ENCODE measurements at regions of chr6 and their contacts with region 1.

Region 1: GRCh38 chr6:28136585-28137504 is 4.8 kb upstream of the ZKSCAN8 start:
- DNase-seq: peak; percentile 75 to 88
- ATAC-seq: peak; percentile 62 to 77 (median 75)
- H3K4me3 ChIP-seq: peak overlapping the region; percentile 88
- H3K4me3 Mint-ChIP-seq: peak overlapping the region; percentile 97
- H3K27ac ChIP-seq: peak overlapping the region; percentile 95
- H3K27ac Mint-ChIP-seq: peak overlapping the region; percentile 99 to 100
- H3K4me1 ChIP-seq: peaks cover 16% of the 10 kb centered on the region
- H3K4me1 Mint-ChIP-seq: peaks cover 64 to 75% of the 10 kb centered on the region in 2 donors
- H3K27me3 ChIP-seq: no peaks in the 10 kb centered on the region
- H3K27me3 Mint-ChIP-seq: no peaks in the 10 kb centered on the region
- CTCF ChIP-seq: no peak

Region 2: GRCh38 chr6:27059621-27060425 is 1077.0 kb before region 1 on chr6:
- intact Hi-C with region 1: no loop called
- DNase-seq: no peak
- ATAC-seq: no peak
- H3K4me3 ChIP-seq: no peak overlapping the region
- H3K4me3 Mint-ChIP-seq: no peak overlapping the region
- H3K27ac ChIP-seq: no peak overlapping the region
- H3K27ac Mint-ChIP-seq: no peak overlapping the region
- H3K4me1 ChIP-seq: no peaks in the 10 kb centered on the region
- H3K4me1 Mint-ChIP-seq: no peaks in the 10 kb centered on the region
- H3K27me3 ChIP-seq: peaks cover 5% of the 10 kb centered on the region
- H3K27me3 Mint-ChIP-seq: peaks cover 30 to 51% of the 10 kb centered on the region in 2 donors
- CTCF ChIP-seq: no peak

Region 3: DNA sequence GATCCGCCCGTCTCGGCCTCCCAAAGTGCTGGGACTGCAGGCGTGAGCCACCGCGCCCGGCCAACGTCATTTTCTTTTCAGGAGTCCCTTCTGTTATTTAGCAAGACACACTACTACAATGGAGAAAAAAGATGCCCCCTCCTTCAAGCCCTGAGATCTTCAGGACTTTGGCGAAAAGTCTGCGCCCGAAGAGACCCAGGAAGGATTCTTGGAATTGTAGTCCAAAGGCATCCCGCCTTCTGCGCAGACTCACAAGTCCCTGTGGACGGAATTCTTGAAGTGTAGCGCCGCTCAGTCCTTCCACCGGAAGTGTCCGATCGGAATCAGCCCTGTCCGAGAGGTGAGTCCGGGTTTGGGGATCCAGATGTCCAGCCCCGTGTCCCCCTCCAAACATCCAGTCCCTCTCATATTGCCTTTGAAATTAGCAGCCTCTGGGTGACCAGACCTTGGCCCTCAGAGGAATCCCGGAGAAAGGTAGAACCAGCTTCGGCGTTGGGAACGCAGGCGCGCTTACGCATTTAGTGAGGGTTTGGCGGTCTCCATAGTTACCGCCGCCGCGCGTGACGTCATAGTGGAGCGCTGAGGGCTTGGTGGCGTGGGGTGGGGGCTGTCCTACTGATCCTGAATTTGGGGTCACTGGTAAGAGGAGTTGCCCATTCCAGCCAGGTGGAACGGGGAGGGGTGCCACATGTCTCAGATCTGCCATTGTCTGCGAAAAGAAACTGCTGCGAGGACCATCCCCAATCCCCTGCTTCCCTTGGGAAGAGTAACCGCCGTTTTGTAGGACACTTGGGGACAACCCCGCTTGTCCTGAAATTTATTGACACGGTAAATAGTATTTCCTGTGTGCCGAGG is 56.0 kb before region 1 on chr6:
- intact Hi-C with region 1: loop called (anchors 1 kb)
- DNase-seq: peak; percentile 87 to 96
- ATAC-seq: peak; percentile 81 to 90 (median 87)
- H3K4me3 ChIP-seq: peak overlapping the region; percentile 83
- H3K4me3 Mint-ChIP-seq: peak overlapping the region; percentile 90
- H3K27ac ChIP-seq: peak overlapping the region; percentile 92
- H3K27ac Mint-ChIP-seq: peak overlapping the region; percentile 85 to 90
- H3K4me1 ChIP-seq: peaks cover 10% of the 10 kb centered on the region
- H3K4me1 Mint-ChIP-seq: peaks cover 17 to 26% of the 10 kb centered on the region in 2 donors
- H3K27me3 ChIP-seq: no peaks in the 10 kb centered on the region
- H3K27me3 Mint-ChIP-seq: peaks cover 0 to 9% of the 10 kb centered on the region in 2 donors
- CTCF ChIP-seq: no peak

Region 4: DNA sequence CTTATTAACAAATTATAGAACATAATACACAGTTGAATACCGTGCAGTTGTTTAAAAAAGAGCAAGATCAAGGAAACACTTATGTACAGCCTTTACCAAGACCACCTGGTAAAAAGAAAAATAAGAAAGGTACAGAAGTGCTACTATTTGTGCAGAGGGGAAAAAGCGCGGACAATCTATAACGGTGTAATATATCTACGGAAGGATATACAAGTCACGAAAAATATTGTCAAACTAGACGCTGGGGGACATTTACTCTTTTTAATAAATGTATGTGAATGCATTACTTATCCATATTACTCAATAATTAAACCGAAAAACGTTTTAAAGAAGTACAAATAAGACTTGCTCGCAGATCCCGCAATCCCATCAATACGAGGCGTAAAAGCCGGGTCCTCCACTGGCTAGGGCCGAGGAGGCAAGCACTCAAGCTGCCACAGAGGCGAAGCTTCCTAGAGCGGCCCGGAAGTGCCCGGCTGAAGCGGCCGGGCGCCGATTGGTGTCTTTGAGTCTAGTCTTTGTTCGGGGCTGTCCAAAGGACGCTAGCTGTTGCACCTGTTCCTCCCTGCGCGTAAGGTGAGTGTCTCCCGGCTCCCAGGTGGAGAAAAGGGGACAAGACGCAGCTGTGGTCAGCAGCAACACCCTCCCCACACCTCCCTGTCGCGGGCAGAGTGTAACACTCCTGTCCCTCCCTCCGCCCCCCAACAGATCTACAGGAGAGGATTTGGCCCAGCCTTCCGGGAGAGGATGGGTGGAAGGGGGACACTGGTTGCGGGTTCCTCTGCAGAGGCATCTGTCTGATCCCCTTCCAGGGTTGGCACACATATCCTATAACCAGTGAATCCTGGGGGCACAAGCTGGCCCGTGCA is 12.5 kb before region 1 on chr6 and contains the start of gene ZSCAN16:
- intact Hi-C with region 1: loop called (anchors 1 kb)
- DNase-seq: peak; percentile 76 to 84
- ATAC-seq: peak; percentile 96 to 98 (median 98)
- H3K4me3 ChIP-seq: peak within 1 kb of the TSS; percentile 60
- H3K4me3 Mint-ChIP-seq: peak within 1 kb of the TSS; percentile 92
- H3K27ac ChIP-seq: peak within 1 kb of the TSS; percentile 72
- H3K27ac Mint-ChIP-seq: peak within 1 kb of the TSS; percentile 85 to 89
- H3K4me1 ChIP-seq: peaks cover 9% of the 10 kb centered on the region
- H3K4me1 Mint-ChIP-seq: peaks cover 33 to 40% of the 10 kb centered on the region in 2 donors
- H3K27me3 ChIP-seq: no peaks in the 10 kb centered on the region
- H3K27me3 Mint-ChIP-seq: no peaks in the 10 kb centered on the region
- CTCF ChIP-seq: no peak
- total RNA-seq, gene ZSCAN16: 7.7 to 9.1 (median 7.8) TPM

Region 5: GRCh38 chr6:28296520-28297060 is 159.7 kb after region 1 on chr6:
- intact Hi-C with region 1: no loop called
- DNase-seq: no peak
- ATAC-seq: no peak
- H3K4me3 ChIP-seq: no peak overlapping the region
- H3K4me3 Mint-ChIP-seq: no peak overlapping the region
- H3K27ac ChIP-seq: no peak overlapping the region
- H3K27ac Mint-ChIP-seq: no peak overlapping the region
- H3K4me1 ChIP-seq: no peaks in the 10 kb centered on the region
- H3K4me1 Mint-ChIP-seq: no peaks in the 10 kb centered on the region
- H3K27me3 ChIP-seq: no peaks in the 10 kb centered on the region
- H3K27me3 Mint-ChIP-seq: no peaks in the 10 kb centered on the region
- CTCF ChIP-seq: no peak

Region 6: GRCh38 chr6:28335564-28336283 is 198.9 kb after region 1 on chr6 and contains the start of gene ZSCAN31:
- intact Hi-C with region 1: loop called (anchors 5 kb)
- DNase-seq: peak; percentile 78 to 91
- ATAC-seq: peak; percentile 86 to 95 (median 89)
- H3K4me3 ChIP-seq: peak within 1 kb of the TSS; percentile 78
- H3K4me3 Mint-ChIP-seq: no peak within 1 kb of the TSS
- H3K27ac ChIP-seq: peak within 1 kb of the TSS; percentile 93
- H3K27ac Mint-ChIP-seq: no peak within 1 kb of the TSS
- H3K4me1 ChIP-seq: peaks cover 18% of the 10 kb centered on the region
- H3K4me1 Mint-ChIP-seq: peaks cover 0 to 15% of the 10 kb centered on the region in 2 donors
- H3K27me3 ChIP-seq: no peaks in the 10 kb centered on the region
- H3K27me3 Mint-ChIP-seq: peaks cover 0 to 11% of the 10 kb centered on the region in 2 donors
- CTCF ChIP-seq: no peak
- total RNA-seq, gene ZSCAN31: 0.65 to 2.2 (median 0.72) TPM

Region 7: DNA sequence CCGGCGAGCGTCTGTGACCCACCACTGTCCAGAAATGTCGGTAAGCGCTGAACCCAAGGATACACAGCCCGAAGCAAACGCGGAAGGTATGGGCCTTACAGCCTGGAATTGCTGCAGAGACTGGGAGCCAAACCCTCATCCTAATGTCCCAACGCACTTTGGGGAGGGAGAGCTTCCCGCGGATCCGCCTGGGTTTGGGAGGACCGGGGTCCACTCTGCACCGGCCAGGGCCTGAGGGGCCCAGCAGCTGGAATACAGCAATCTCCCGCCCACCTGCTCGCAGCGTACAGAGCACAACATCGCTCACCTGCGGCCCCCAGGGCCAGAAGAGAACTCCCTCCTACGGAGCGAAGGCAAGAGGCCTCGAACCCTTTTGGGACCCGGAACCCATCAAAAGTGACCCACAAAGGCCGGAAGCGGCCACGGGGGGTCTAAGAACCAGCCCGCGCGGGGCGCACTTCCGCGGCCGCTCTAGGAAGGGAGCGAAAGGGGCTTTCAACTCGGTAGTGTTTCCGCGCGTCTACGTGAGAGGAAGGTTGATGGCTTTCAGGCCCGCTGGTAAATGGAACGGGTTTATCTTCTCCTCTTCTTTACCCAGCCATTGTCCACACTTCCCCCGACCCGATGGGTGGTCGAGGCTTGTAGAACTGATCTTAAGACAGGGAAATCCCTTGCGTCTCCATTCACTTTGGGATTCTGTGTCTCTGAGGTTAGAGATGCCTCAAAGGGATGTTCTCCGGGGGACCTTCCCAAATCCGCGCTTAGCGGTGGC is 262.7 kb after region 1 on chr6 and contains the start of gene ZSCAN12:
- intact Hi-C with region 1: loop called (anchors 5 kb)
- DNase-seq: peak; percentile 81 to 90
- ATAC-seq: peak; percentile 95 to 96 (median 96)
- H3K4me3 ChIP-seq: peak within 1 kb of the TSS; percentile 92
- H3K4me3 Mint-ChIP-seq: peak within 1 kb of the TSS; percentile 93
- H3K27ac ChIP-seq: peak within 1 kb of the TSS; percentile 73
- H3K27ac Mint-ChIP-seq: peak within 1 kb of the TSS; percentile 80 to 89
- H3K4me1 ChIP-seq: peaks cover 16% of the 10 kb centered on the region
- H3K4me1 Mint-ChIP-seq: peaks cover 46 to 49% of the 10 kb centered on the region in 2 donors
- H3K27me3 ChIP-seq: peaks cover 3% of the 10 kb centered on the region
- H3K27me3 Mint-ChIP-seq: peaks cover 18 to 40% of the 10 kb centered on the region in 2 donors
- CTCF ChIP-seq: peak; percentile 54
- total RNA-seq, gene ZSCAN12: 3.5 to 4.9 (median 3.9) TPM

Region 8: DNA sequence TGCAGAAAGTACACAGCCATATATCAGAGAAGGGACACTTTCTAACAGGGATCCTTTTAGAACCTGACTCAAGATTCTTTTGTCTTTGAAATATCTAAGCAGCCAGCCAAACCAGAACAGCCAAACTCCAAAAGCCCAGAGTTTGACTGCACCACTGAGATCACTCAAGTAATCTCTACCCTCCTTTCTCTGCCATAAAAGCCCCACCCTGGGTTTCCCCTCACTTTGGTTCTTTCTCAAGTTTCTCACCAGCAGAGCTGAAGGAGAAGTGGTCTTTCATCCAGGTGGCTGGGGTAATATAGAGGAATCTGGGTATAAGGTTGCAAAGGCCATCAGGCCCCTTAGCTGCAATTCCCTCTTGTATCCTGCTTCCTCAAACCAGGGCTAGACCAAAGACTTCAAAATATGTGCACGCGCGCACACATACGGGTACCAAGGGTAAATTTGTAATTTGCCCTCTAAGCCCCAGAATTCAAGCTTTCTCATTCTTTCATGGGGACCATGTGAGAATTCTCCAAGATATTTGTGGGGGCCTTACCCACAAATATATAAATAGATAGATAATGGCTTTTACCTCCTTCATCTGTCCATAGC is 431.8 kb after region 1 on chr6:
- intact Hi-C with region 1: no loop called
- DNase-seq: no peak
- ATAC-seq: no peak
- H3K4me3 ChIP-seq: no peak overlapping the region
- H3K4me3 Mint-ChIP-seq: no peak overlapping the region
- H3K27ac ChIP-seq: no peak overlapping the region
- H3K27ac Mint-ChIP-seq: no peak overlapping the region
- H3K4me1 ChIP-seq: no peaks in the 10 kb centered on the region
- H3K4me1 Mint-ChIP-seq: no peaks in the 10 kb centered on the region
- H3K27me3 ChIP-seq: peaks cover 17% of the 10 kb centered on the region
- H3K27me3 Mint-ChIP-seq: peaks cover 16 to 34% of the 10 kb centered on the region in 2 donors
- CTCF ChIP-seq: no peak